ENCODE measurements at regions of chr6 and their contacts with region 1.

Region 1: GRCh38 chr6:3356056-3356761 is 97.5 kb downstream of the PSMG4 start:
- DNase-seq: peak; percentile 35 to 90 (median 66)
- ATAC-seq: peak; percentile 87
- H3K4me3 ChIP-seq: peak overlapping the region; percentile 51 to 58
- H3K4me3 Mint-ChIP-seq: peak overlapping the region; percentile 81
- H3K27ac ChIP-seq: peak overlapping the region; percentile 48 to 79
- H3K27ac Mint-ChIP-seq: peak overlapping the region; percentile 90
- H3K4me1 ChIP-seq: peaks cover 27% of the 10 kb centered on the region
- H3K4me1 Mint-ChIP-seq: peaks cover 33% of the 10 kb centered on the region
- H3K27me3 ChIP-seq: no peaks in the 10 kb centered on the region
- H3K27me3 Mint-ChIP-seq: no peaks in the 10 kb centered on the region
- CTCF ChIP-seq: no peak

Region 2: GRCh38 chr6:3118353-3119039 is 237.7 kb before region 1 on chr6 and contains the start of gene BPHL:
- CTCF ChIA-PET with region 1: no interaction called
- POLR2A ChIA-PET with region 1: no interaction called
- intact Hi-C with region 1: loop called (anchors 5 kb)
- DNase-seq: peak; percentile 97 to 100 (median 99)
- ATAC-seq: peak; percentile 95
- H3K4me3 ChIP-seq: peak within 1 kb of the TSS; percentile 63 to 80
- H3K4me3 Mint-ChIP-seq: peak within 1 kb of the TSS; percentile 92
- H3K27ac ChIP-seq: peak within 1 kb of the TSS; percentile 85 to 90
- H3K27ac Mint-ChIP-seq: peak within 1 kb of the TSS; percentile 96
- H3K4me1 ChIP-seq: peaks cover 12% of the 10 kb centered on the region
- H3K4me1 Mint-ChIP-seq: peaks cover 13% of the 10 kb centered on the region
- H3K27me3 ChIP-seq: no peaks in the 10 kb centered on the region
- H3K27me3 Mint-ChIP-seq: no peaks in the 10 kb centered on the region
- CTCF ChIP-seq: no peak
- total RNA-seq, gene BPHL: 3.7 to 5.5 TPM

Region 3: DNA sequence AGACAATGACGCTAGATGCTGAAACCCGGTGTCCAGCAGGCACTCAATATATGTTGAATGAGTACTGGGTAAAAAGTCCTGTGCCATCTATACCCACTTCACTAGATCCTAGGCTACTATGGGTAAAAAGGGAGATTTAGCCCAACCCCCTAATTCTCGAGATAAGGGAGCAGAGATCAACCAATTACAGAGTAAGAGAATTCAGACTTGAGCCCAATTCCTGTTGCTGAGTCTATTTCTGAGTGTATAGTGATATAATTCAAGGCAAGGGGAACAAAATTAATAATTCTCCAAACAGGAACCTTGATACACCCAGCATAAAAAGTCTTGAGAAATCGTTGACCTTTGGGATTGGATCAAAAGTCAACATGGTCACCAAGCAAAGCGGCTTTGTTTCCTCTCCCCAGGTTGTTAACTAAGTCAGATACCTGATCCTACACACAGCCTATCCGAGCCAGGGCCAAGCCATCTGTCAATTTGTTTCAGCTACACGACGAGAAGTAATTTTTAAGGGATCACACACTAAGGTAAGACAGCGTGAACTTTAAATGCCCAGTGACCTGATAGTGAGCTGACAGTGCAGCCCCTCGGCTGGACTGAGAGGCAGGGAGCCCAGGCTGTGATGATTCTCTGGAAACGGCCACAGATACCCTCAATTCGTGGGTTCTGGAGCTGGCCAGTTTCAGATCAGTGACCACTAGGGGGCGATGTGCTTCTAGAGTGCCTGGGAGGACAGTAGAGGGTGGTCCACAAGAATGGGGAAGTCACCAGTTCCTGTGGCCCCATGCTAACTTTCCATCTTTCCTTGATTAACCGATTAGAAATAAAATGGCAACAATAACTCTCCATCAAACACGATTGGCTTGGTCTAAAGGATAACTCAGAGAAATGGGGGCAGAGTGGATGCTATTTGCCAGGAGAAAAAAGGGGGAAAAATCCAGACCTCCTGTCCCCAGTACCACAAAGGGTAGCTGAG is 54.5 kb after region 1 on chr6:
- CTCF ChIA-PET with region 1: no interaction called
- POLR2A ChIA-PET with region 1: no interaction called
- intact Hi-C with region 1: loop called in 1 of 2 experiments (anchors 5 kb)
- DNase-seq: peak; percentile 30 to 77 (median 68)
- ATAC-seq: peak; percentile 70
- H3K4me3 ChIP-seq: no peak overlapping the region
- H3K4me3 Mint-ChIP-seq: no peak overlapping the region
- H3K27ac ChIP-seq: no peak overlapping the region
- H3K27ac Mint-ChIP-seq: no peak overlapping the region
- H3K4me1 ChIP-seq: peaks cover 6% of the 10 kb centered on the region
- H3K4me1 Mint-ChIP-seq: peaks cover 10% of the 10 kb centered on the region
- H3K27me3 ChIP-seq: no peaks in the 10 kb centered on the region
- H3K27me3 Mint-ChIP-seq: no peaks in the 10 kb centered on the region
- CTCF ChIP-seq: peak; percentile 60

Region 4: DNA sequence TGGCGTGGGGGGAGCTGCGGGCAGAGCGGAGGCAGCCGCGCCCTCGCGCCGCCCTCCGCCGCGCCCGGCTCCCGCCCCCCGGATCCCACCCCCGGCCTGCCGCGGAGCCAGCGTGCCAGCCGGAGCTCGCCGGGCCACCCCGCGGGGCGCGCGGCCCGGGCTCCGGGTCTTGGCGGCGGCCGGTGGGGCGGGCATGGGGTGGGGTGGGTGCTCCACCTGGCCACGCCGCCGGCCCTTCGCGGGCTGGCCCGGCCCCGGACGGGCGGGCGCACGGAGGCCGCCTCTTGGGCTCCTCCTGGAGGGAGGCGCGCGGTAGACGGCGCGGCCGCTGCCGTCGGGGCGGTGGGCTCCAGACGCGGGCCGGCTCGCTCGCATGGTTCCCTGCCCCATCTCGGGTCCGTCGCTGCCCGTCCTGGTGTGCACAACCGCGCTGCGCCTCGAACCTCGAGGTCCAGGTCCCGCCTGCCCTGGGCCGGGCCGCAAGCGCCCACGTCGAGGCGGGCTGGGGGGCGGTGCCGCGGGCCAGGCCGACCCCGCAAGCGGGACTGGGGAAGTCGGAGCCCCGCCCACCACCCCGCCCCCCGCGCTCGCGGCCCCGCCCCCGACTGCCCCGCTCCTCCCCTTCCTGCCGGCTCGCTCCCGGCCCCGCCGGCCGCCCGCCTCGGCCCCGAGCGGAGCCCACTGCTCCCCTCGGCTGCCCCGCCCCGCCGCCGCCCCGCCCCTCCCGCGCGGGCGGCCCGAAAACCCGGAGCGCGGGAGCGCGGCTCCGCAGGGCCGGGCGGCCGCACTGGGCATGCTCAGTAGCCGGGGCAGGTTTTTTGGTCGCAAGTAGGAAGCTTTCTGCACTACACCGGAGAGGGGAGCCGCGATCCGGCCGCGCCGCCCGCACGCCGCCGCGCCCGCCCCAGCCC is 1419.6 kb after region 1 on chr6 and contains the start of gene CDYL:
- CTCF ChIA-PET with region 1: no interaction called
- POLR2A ChIA-PET with region 1: no interaction called
- intact Hi-C with region 1: loop called (anchors 5 to 10 kb)
- DNase-seq: peak; percentile 76 to 94 (median 89)
- ATAC-seq: peak; percentile 75
- H3K4me3 ChIP-seq: peak within 1 kb of the TSS; percentile 63 to 64
- H3K4me3 Mint-ChIP-seq: peak within 1 kb of the TSS; percentile 91
- H3K27ac ChIP-seq: peak within 1 kb of the TSS; percentile 29 to 38
- H3K27ac Mint-ChIP-seq: peak within 1 kb of the TSS; percentile 91
- H3K4me1 ChIP-seq: peaks cover 25% of the 10 kb centered on the region
- H3K4me1 Mint-ChIP-seq: peaks cover 44% of the 10 kb centered on the region
- H3K27me3 ChIP-seq: no peaks in the 10 kb centered on the region
- H3K27me3 Mint-ChIP-seq: no peaks in the 10 kb centered on the region
- CTCF ChIP-seq: no peak
- total RNA-seq, gene CDYL: 35.9 to 36.3 TPM

Measured in CD8-positive, alpha-beta T cell (primary cell).